Motor neuron (in vitro differentiated cells): ENCODE measurements at regions of chr7 and their contacts with region 1.

Region 1: GRCh38 chr7:111741811-111742240 is 179.5 kb upstream of the IMMP2L start:
- ATAC-seq: peak; percentile 62 to 84 (median 76)
- H3K4me3 ChIP-seq: no peak overlapping the region
- H3K27ac ChIP-seq: no peak overlapping the region
- H3K4me1 ChIP-seq: peaks cover 0 to under 1% of the 10 kb centered on the region in 2 donors

Region 2: GRCh38 chr7:111098011-111098925 is 643.6 kb before region 1 on chr7:
- in situ Hi-C with region 1: loop called in 2 of 9 experiments (anchors 25 kb)
- ATAC-seq: peak in 5 of 8 experiments; percentile 33 to 76 (median 52)
- H3K4me3 ChIP-seq: no peak overlapping the region
- H3K27ac ChIP-seq: no peak overlapping the region
- H3K4me1 ChIP-seq: peaks cover 5 to 27% of the 10 kb centered on the region in 2 donors

Region 3: GRCh38 chr7:111113263-111114017 is 628.4 kb before region 1 on chr7:
- in situ Hi-C with region 1: loop called in 1 of 9 experiments (anchors 25 kb)
- ATAC-seq: peak in 2 of 8 experiments; percentile 63 to 69
- H3K4me3 ChIP-seq: no peak overlapping the region
- H3K27ac ChIP-seq: no peak overlapping the region
- H3K4me1 ChIP-seq: peaks cover 0 to 4% of the 10 kb centered on the region in 2 donors

Region 4: DNA sequence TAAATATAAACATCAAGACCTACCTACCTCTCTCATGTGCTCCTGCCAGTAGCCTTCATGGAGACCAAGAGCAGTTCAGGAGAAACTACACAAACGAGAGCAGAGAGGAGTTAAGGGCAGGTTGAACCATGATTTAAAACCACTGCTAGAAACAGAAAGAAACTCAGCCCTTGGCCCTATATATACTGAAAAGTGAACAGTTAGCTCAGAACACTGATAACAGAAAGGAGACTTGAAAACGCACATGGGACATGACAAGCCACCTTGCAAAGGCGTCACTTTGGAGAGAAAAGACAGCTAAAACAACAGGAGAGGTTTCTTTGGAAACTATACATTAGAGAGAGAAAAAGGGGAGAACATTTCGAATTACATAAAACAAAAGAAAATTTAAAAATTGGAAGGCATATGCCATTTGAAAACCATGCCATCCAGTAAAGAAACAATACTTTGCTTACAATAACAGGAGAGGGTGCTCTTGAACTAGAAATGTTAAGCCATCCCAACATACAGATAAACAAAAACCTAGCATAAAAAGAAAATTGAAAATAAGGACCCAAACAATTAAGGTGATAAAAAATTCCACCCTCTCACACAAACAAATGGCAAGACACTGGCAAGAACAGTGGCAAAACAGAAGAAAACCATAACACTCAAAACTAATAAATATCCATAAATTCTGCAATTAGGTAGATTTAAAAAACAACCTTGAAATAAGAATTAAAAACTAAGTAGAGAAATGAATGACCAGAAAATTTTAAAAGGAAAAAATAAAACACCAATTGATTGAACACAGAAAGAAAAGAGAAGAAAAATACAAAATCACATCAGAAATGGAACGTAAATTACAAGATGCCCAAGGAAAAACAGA is 412.2 kb before region 1 on chr7:
- in situ Hi-C with region 1: loop called in 1 of 9 experiments (anchors 25 kb)
- ATAC-seq: peak in 1 of 8 experiments; percentile 52
- H3K4me3 ChIP-seq: no peak overlapping the region
- H3K27ac ChIP-seq: no peak overlapping the region
- H3K4me1 ChIP-seq: no peaks in the 10 kb centered on the region